Mammary epithelial cell (primary cell): ENCODE measurements at regions of chr19 and their contacts with region 1.

Region 1: DNA sequence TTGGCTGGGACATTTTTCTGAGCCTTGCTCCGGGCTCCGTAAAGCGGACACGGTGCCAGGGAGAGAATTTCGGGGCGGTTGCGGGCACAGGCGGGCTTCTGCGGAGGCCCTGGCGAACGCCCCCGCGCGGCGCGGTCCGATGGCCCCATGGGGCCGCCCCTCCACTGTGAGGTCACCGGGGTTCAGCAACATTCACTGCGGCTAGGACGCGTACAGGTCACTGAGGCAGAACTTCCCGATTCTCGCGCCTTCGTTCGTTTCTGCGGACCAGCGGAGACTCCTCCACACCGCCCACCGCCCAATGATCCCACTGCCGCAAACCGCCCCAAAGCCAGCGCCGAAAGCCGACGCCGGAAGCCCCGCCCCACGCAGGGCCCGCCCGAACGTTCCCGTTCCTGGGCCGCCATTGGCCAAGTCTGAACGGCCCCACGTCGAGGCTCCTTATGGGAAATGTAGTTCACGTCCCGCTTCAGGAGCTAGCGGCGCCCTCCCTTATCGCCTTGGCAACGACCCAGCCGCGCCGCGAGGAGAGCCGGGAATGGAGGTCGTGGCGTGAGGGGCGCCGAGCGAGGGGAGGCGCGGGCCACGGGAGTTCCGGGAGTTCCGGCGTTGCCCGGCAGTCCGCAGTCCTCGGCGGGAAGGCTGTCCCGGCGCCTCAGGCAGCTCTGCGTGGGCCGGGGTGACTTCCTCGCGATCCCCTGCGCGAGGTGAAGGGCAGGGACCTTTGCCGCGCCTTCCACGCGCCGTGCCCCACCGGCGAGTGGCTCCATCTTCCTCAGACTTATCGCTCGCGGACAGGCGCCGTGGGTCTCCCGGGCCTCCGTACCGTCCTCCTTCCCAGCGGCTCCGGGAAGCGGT is at the start of gene ZNF584:
- DNase-seq: peak; percentile 89
- H3K4me3 ChIP-seq: peak within 1 kb of the TSS; percentile 71 to 93 (median 90)
- H3K27ac ChIP-seq: peak within 1 kb of the TSS; percentile 54
- H3K4me1 ChIP-seq: peaks cover 16% of the 10 kb centered on the region
- H3K27me3 ChIP-seq: no peaks in the 10 kb centered on the region
- CTCF ChIP-seq: peak in 1 of 2 donors; percentile 19
- total RNA-seq, gene ZNF584: 16.9 to 22.8 TPM

Region 2: GRCh38 chr19:58439576-58440554 is 31.5 kb after region 1 on chr19 and contains the start of gene ZNF132:
- CTCF ChIA-PET with region 1: no interaction called
- dilution Hi-C with region 1: no loop called
- in situ Hi-C with region 1: loop called in 1 of 2 experiments (anchors 5 kb)
- intact Hi-C with region 1: no loop called
- DNase-seq: peak; percentile 98
- H3K4me3 ChIP-seq: peak within 1 kb of the TSS; percentile 44 to 73 (median 71)
- H3K27ac ChIP-seq: peak within 1 kb of the TSS; percentile 60
- H3K4me1 ChIP-seq: peaks cover 14% of the 10 kb centered on the region
- H3K27me3 ChIP-seq: no peaks in the 10 kb centered on the region
- CTCF ChIP-seq: no peak
- total RNA-seq, gene ZNF132: 1.3 to 3.7 TPM

Region 3: DNA sequence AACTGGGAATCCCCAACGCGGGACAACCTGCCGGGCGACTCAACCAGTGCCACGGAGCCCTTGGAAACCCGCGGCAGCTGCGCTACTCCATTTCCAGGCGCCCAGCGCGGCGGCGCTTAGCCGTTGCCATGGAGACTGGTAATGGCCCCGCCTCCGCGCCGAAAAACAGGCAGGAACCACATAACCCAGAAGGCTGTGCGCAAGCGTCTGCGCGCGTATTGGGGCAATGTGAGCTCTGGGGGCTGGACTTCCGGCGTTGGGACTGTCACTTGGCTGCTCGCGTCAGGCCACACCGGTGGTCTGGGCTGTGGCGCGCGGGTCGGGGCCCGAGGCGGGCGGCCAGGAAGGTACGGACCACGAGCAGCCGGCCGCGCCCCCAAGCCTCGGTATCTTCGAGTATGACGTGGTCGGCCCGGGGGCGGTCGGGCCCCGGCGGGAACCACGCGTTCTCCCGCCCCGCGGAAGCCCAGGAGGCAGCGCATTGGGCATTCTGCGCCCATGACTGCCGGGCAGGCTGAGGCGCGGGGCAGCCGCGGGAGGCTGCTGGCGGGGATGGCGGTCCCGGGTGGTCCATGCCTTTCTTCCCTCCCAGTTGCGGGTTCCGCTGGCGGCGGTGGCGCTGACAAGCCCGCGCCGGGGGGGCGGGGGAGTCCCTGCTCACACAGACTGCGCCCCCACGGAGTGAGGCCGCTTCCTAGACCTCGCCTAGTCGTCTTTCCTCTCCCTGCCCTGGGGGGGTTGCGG is 43.1 kb after region 1 on chr19 and contains the start of gene ZNF324B:
- CTCF ChIA-PET with region 1: no interaction called
- dilution Hi-C with region 1: no loop called
- in situ Hi-C with region 1: no loop called
- intact Hi-C with region 1: loop called (anchors 5 kb)
- DNase-seq: peak; percentile 94
- H3K4me3 ChIP-seq: peak within 1 kb of the TSS; percentile 81 to 89 (median 82)
- H3K27ac ChIP-seq: peak within 1 kb of the TSS; percentile 57
- H3K4me1 ChIP-seq: peaks cover 4% of the 10 kb centered on the region
- H3K27me3 ChIP-seq: no peaks in the 10 kb centered on the region
- CTCF ChIP-seq: no peak
- total RNA-seq, gene ZNF324B: 8.3 to 14.2 TPM

Region 4: DNA sequence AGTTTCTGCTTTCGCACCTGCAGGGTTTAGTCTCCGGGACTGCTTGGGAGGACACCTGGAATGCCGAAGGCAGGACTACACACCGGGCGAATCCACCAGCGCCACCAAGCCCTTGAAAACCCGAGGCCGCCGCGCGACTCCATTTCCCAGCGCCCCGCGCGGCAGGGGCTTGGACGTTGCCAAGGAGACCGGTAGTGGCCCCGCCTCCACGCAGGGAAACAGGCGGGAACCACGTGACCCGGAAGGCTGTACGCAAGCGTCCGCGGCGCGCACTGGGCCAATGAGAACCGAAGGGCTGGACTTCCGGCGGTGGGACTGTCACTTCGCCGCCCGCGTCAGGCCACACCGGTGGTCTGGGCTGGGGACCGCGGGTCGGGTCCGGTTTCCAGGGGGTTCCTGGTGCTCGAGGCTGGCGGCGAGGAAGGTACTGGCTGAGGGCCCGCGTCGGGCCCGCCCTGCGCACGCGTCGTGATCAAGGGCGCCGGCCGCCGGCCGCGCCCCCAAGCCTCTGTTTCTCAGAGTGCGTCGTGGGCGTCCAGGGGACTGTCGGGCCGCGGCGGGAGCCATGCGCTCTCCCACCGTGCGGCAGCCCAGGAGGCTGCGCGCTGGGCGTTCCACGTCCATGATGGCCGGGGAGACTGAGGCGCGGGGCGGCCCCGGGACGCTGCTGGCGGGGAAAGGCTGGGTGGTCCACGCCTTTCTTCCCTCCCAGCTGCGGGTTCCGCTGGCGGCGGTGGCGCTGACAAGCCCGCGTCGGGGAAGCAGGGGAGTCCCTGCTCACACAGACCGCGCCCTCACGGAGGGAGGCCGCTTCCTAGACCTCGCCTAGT is 58.6 kb after region 1 on chr19 and contains the start of gene ZNF324:
- CTCF ChIA-PET with region 1: no interaction called
- dilution Hi-C with region 1: no loop called
- in situ Hi-C with region 1: no loop called
- intact Hi-C with region 1: loop called (anchors 1 kb)
- DNase-seq: peak; percentile 96
- H3K4me3 ChIP-seq: peak within 1 kb of the TSS; percentile 70 to 96 (median 79)
- H3K27ac ChIP-seq: peak within 1 kb of the TSS; percentile 66
- H3K4me1 ChIP-seq: peaks cover 15% of the 10 kb centered on the region
- H3K27me3 ChIP-seq: no peaks in the 10 kb centered on the region
- CTCF ChIP-seq: peak in 1 of 2 donors; percentile 20
- total RNA-seq, gene ZNF324: 12.7 to 28.7 TPM